ENCODE measurements at regions of chr11 and their contacts with region 1.

Region 1: GRCh38 chr11:65888163-65888814 is at the start of gene FIBP:
- DNase-seq: peak; percentile 93

Region 2: DNA sequence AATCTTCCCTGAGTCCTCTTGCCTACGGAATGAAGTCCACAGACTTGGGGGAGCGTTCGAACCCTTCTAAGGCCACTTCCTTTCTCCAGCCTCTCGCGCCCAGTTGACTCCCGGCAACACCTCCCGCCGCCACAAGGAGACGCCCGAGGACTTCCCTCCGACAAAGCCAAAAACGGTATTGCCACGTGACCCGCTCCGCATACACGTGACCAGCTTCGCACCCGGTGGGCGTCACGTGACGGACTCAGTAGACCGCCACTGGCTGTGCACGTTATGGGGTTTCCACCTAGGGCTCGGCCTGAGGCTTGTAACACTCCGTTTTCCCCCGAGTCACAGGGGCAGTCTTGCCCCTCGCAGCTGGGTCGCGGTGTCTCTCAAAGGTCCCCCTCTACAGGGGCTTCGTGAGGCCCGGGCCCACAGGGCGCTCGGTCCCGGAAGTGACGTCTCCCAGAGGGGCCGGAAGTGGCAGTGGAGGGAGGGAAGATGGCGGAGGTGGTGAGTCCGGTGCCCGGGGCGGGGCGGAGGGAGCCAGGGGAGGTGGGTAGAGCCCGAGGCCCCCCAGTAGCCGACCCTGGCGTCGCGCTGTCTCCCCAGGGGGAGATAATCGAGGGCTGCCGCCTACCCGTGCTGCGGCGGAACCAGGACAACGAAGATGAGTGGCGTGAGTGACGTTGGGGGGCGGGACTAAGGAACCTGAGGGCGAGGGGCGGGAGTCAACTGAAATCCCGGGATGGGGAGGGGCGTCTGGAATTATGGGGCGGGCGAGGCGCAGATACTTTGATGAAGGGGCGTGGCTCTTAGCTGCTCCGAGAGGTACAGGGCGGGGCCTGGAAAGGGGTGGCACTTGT is 176.3 kb before region 1 on chr11 and contains the start of gene KAT5:
- CTCF ChIA-PET with region 1: interaction called, 6 read pairs
- POLR2A ChIA-PET with region 1: interaction called, 40 read pairs
- DNase-seq: peak; percentile 91

Region 3: GRCh38 chr11:65859200-65859811 is 29.0 kb before region 1 on chr11:
- CTCF ChIA-PET with region 1: interaction called, 59 read pairs
- POLR2A ChIA-PET with region 1: interaction called, 289 read pairs
- DNase-seq: peak; percentile 87

Region 4: GRCh38 chr11:65900125-65900898 is 12.0 kb after region 1 on chr11 and contains the start of gene FOSL1:
- CTCF ChIA-PET with region 1: interaction called, 36 read pairs
- POLR2A ChIA-PET with region 1: interaction called, 72 read pairs
- DNase-seq: peak; percentile 72

Region 5: DNA sequence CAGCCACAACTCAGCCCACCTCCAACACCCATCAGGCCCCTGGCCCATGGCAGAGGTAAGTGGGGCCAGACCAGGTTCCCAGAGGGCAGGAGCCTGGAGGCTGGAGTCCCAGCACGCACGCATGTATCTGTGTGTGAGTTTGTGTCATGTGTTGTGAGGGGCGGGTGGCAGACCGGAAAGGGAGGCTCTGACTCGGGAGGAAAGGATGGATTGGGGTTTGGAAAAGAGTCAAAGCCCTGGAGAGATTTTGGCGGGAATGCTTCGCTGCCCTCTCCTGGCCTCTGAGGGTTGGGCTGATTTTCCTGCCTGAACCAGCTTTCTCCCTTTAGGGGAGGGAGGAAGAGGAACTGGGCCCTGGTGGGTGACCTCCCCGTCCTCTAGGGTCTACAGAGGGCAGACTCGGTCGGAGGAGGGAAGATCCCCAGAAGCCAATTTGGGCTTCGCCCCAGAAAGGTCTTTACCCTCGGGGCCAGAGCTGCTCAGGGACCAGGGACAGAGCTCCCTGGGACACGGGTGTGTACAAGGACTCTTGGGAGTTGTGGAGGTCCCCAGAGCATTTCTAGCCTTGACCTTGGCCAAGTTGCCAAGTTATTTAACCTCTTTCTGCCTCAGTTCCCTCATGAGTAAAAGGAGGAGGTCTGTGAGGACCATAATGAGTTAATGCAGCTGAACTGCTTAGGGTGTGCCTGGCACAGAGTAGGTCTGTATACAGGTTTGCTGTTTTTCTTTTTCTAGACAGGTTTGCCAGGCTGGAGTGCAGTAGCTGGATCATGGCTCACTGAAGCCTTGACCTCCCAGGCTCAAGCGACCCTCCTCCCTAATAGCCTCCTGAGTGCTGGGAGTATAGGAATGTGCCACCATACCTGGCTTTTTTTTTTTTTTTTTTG is 23.6 kb after region 1 on chr11:
- CTCF ChIA-PET with region 1: interaction called, 26 read pairs
- POLR2A ChIA-PET with region 1: interaction called, 46 read pairs
- DNase-seq: peak; percentile 68

Region 6: DNA sequence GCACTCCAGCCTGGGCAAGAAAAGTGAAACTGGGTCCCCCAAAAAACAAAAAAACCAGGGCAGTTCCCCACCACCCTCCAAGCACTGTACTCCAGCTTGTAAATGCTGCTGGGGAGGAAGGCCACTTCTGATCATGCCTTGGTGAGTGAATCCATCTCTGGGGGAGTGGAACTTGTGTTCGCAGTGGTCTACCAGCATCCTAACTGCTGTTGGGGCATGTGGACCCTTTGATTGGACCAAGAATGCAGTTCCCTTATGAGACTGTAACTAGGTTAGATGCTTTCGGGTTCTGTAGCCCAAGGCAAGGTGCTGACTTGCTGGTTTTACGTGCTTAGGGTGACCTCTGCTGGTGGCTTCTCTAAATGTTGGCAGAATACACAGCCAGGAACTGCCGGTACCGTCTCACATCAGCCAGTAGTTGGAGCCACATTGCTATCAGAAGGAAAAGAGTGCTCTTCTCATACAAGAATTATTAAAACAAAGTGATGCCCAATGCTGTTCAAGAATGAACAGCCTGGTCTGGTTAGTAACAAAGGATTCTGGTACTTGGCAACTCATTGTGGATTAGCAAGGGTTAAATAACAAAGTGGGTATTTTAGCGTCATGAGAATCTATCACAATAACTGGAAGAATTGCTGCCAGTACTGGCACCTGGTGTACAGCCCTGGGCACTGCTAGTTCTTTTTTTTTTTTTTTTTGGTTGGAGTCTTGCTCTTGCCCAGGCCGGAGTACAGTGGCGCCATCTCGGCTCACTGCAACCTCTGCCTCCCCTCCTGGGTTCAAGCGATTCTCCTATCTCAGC is 100.7 kb after region 1 on chr11:
- CTCF ChIA-PET with region 1: interaction called, 12 read pairs
- POLR2A ChIA-PET with region 1: interaction called, 8 read pairs
- DNase-seq: peak; percentile 88

Measured in HEK293T (cell line).